HEK293 (cell line): ENCODE measurements at regions of chr20 and their contacts with region 1.

Region 1: DNA sequence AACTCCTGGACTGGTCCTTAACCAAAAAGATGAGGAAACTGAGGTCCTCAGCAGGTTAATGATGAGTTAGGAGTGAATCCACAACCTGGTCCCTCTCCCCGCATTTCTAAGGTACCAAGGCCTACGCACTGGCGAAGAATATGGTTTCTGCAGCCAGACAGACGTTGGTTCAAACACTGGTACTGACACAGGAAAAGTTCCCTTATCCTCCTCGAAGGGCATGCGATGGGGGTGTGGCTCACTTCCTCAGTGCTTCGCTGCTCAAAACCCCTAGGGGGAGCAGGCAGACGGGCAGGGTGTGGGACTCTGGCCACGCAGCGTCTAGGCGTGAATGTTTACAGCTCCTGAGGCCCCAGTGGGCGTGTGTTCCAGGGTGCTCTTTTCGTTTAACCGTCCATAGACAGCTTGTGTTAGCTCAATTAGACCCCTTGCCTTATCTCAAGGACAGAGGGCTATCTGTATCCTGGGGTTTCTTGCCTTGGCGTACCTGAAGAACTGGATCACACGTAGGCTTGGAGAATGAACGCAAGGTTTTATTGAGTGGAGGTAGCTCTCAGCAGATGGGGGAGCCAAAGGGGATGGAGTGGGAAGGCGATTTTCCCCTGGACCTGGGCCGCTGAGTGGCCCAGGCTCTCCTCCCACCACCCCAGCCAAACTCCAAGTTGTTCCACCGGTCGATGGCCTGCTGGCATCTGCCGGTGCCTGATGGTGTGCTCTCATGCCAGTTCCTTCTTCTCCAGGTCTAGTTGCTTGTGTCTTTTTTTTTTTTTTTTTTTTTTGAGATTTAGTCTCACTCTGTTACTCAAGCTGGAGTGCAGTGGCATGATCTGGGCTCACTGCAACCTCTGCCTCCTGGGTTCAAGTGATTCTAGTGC is 31.8 kb upstream of the PTPN1 start:
- H3K4me3 ChIP-seq: no peak overlapping the region
- H3K27ac ChIP-seq: no peak overlapping the region
- H3K4me1 ChIP-seq: no peaks in the 10 kb centered on the region
- CTCF ChIP-seq: peak; percentile 50; the same call in 1 of the 2 replicates

Region 2: GRCh38 chr20:50146732-50147662 is 331.4 kb before region 1 on chr20:
- CTCF ChIA-PET with region 1: no interaction called
- POLR2A ChIA-PET with region 1: no interaction called
- H3K4me3 ChIP-seq: no peak overlapping the region
- H3K27ac ChIP-seq: no peak overlapping the region
- H3K4me1 ChIP-seq: no peaks in the 10 kb centered on the region; the same call in 1 of the 2 replicates
- CTCF ChIP-seq: no peak

Region 3: DNA sequence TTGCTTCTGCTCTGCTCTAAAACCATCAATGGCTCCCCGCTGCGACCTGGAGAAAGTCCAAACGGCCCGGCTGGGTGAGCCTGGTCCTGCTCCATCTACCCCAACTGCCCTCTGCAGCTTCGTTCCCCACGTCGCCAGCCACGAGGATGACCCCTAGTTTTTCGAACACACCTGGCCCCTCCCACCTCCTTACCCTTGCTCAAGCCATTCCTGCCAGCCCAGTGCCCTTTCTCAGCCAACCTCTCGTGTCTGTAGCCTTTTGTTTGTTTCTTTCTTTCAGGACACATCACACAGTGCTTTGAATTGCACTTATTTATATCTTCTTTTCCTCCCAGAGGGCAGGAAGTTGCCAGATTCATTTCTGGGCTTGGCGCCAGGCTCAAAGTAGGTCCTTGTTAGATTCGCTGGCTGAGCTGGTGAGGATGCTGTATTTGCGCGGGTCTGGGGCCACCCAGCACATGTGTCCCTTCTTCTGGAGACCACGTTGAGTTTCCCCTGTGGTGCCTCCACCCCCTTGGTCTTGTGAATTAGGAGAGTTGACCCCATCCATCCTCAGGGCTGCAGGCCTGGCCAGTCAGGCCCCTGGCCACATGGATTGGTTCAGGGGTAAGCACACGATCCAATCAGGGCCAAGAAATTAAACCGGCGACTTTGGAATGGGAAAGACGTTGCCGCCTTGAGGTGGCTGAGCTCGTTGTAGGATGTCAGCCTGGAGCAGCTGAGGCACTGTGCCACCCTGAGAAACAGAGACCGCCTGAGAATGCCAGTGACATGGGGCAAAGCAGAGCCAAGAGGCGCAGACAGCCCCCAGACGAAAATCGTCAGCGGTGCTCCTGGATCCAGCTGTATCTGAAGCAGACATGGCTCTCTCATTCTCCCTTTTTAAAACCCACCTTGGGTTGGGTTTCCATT is 131.8 kb before region 1 on chr20:
- CTCF ChIA-PET with region 1: no interaction called
- POLR2A ChIA-PET with region 1: no interaction called
- H3K4me3 ChIP-seq: no peak overlapping the region
- H3K27ac ChIP-seq: no peak overlapping the region
- H3K4me1 ChIP-seq: no peaks in the 10 kb centered on the region
- CTCF ChIP-seq: no peak

Region 4: DNA sequence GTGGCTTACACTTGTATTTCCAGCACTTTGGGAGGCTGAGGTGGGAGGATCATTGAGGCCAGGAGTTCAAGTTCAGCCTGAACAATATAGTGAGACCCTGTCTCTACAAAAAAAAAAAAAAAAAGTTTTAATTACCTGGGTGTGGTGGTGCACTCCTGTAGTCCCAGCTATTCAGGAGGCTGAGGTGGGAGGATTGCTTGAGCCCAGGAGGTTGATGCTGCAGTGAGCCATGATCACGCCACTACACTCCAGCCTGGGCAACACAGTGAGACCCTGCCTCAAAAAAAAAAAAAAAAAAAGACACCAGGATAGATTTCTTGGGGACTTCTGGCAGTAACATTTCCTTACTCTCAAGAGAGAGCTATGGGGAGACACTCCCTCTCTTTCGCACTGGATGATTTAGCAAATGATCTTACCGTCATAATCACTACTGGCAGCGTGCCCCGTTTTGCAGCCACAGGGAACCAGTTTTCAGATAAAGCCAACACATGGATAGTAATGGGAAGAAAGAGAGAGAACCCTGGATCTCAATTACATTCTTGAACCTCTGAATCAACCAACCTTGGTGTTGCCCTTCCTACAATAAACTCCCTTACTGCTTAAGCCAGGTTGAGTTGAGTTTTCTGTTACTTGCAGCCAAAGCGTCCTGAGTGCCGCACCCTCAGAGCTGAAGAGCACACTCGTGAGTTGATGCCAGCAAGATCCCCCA is 13.7 kb after region 1 on chr20:
- CTCF ChIA-PET with region 1: interaction called, 15 read pairs
- POLR2A ChIA-PET with region 1: no interaction called
- H3K4me3 ChIP-seq: no peak overlapping the region
- H3K27ac ChIP-seq: no peak overlapping the region
- H3K4me1 ChIP-seq: no peaks in the 10 kb centered on the region
- CTCF ChIP-seq: no peak